Right lobe of liver (tissue), 6 donors: ENCODE measurements at regions of chr3 and their contacts with region 1.

Region 1: GRCh38 chr3:53072653-53073552 is 27.0 kb upstream of the SFMBT1 start:
- DNase-seq: peak; percentile 86 to 88 (median 87)
- ATAC-seq: peak; percentile 92 to 93 (median 92)
- H3K4me3 ChIP-seq: peak overlapping the region; percentile 57 to 89 (median 82)
- H3K27ac ChIP-seq: peak overlapping the region in 2 of 3 donors; percentile 44 to 55
- H3K4me1 ChIP-seq: peaks cover 0 to 11% (median 0%) of the 10 kb centered on the region in 4 donors
- H3K27me3 ChIP-seq: no peaks in the 10 kb centered on the region
- CTCF ChIP-seq: peak; percentile 92 to 97 (median 94)
- POLR2A ChIP-seq: peak; percentile 22

Region 2: DNA sequence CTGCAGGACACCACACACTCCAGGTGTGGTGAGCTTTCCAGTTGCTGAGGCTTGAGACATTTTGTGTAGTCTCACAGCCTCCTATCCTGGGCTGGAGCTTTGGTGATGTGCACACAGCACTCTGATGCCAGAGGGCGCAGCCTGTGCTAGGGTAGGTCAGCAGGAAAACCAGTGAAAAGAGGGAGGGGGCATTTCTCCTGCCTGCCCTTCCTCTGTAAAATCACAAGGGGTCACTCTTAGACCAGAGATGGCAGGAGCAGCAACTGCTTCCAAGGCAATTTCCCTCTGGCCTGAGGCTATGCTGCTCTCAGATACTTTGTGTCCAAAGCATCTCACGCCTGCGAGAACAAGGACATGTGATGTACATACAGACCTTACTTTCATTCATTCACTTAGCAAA is 221.6 kb before region 1 on chr3:
- intact Hi-C with region 1: loop called in 1 of 2 experiments (anchors 10 kb)
- DNase-seq: peak; percentile 61 to 72 (median 67)
- ATAC-seq: peak; percentile 86 to 93 (median 90)
- H3K4me3 ChIP-seq: no peak overlapping the region
- H3K27ac ChIP-seq: no peak overlapping the region
- H3K4me1 ChIP-seq: peaks cover 0 to 8% (median under 1%) of the 10 kb centered on the region in 4 donors
- H3K27me3 ChIP-seq: no peaks in the 10 kb centered on the region
- CTCF ChIP-seq: peak; percentile 63 to 94 (median 70)
- POLR2A ChIP-seq: no peak

Region 3: GRCh38 chr3:52867098-52867800 is 205.7 kb before region 1 on chr3:
- intact Hi-C with region 1: loop called in 1 of 2 experiments (anchors 10 kb)
- DNase-seq: no peak
- ATAC-seq: no peak
- H3K4me3 ChIP-seq: no peak overlapping the region
- H3K27ac ChIP-seq: no peak overlapping the region
- H3K4me1 ChIP-seq: peaks cover 0 to 4% (median 0%) of the 10 kb centered on the region in 4 donors
- H3K27me3 ChIP-seq: no peaks in the 10 kb centered on the region
- CTCF ChIP-seq: no peak
- POLR2A ChIP-seq: no peak